GM12878 (cell line): ENCODE measurements at regions of chr4 and their contacts with region 1.

Region 1: DNA sequence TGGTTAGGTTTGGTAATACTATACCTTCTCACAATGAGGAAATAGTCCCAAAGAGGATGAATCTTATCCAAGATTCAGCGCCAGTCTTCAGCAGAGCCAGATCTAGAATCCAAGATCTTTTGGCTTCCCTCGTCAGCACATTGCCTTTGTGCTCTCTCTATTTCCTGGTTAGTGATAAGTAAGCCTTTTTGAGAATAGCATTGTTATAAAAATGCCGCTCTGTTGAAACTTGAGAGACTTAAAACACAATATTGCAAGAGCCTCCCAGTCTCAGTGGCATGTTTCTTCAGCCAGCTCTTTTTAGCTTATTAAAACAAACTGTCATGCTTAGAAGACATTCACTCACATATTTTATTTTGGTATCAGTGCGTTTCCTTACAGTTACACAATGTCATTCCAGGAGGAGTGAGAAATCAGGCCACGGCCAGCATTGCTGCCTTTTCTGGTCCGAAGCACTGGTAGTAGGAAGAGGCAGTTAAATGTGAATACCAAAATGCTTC is 141.4 kb downstream of the KLHL8 start:
- DNase-seq: no peak
- ATAC-seq: no peak
- H3K4me3 ChIP-seq: no peak overlapping the region
- H3K27ac ChIP-seq: no peak overlapping the region
- H3K4me1 ChIP-seq: peaks cover 9% of the 10 kb centered on the region; the same call in 1 of the 2 replicates
- H3K27me3 ChIP-seq: no peaks in the 10 kb centered on the region
- CTCF ChIP-seq: no peak
- EP300 ChIP-seq: no peak
- POLR2A ChIP-seq: no peak
- RAD21 ChIP-seq: no peak

Region 2: GRCh38 chr4:87012265-87012953 is 66.6 kb before region 1 on chr4:
- CTCF ChIA-PET with region 1: interaction called, 4 read pairs
- POLR2A ChIA-PET with region 1: interaction called, 11 read pairs
- RAD21 ChIA-PET with region 1: interaction called, 20 read pairs
- SMC1A ChIA-PET with region 1: interaction called, 10 read pairs
- in situ Hi-C with region 1: no loop called
- intact Hi-C with region 1: loop called (anchors 5 kb)
- DNase-seq: peak; percentile 44
- ATAC-seq: peak; percentile 54
- H3K4me3 ChIP-seq: peak overlapping the region; percentile 33
- H3K27ac ChIP-seq: peak overlapping the region; percentile 38
- H3K4me1 ChIP-seq: peaks cover 12% of the 10 kb centered on the region
- H3K27me3 ChIP-seq: no peaks in the 10 kb centered on the region
- CTCF ChIP-seq: no peak
- EP300 ChIP-seq: no peak
- POLR2A ChIP-seq: no peak
- RAD21 ChIP-seq: no peak

Region 3: DNA sequence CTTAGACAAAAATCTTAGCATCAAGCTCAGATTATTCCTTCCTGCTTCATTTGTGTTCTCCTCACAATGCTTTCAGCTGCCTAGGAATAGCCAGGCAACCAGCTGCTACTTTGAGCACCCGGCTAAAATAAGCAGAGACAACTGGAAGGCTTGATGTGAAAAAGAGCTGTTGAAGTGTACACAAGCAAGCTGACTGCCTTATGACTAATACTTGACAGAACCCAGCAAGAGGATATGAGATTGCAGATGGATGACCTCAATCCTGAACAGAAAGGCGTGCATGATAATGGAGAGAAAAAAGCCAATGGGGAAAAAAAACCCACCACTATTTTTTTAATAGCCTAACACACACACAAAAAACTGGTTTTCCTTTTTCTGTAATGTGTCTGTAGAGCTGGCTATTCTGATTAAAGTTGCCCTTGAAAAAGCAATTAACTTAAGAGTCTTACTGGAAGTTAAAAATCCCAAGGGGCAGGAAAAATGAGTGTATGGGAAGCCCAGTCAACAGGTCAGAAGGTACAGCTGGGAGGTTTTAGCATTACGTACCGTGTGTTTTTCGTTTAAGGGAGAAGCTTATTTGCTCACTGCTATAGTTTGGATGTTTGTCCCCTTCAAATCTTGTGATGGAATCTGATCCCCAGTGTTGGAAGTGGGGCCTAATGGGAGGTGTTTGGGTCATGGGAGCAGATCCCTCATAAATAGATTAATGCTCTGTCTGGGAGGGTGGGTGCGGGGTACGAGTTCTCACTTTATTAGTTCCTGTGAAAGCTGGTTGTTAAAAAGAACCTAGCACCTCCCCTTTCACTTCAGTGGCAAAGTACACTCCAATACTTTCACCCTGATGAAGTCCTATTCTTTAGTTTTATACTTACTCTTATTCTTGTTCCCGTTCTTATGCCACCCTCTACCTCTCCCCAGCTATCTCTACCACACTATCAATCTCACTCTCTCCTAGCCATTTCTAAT is 1262.5 kb after region 1 on chr4:
- CTCF ChIA-PET with region 1: no interaction called
- POLR2A ChIA-PET with region 1: no interaction called
- RAD21 ChIA-PET with region 1: no interaction called
- SMC1A ChIA-PET with region 1: no interaction called
- in situ Hi-C with region 1: no loop called
- intact Hi-C with region 1: no loop called
- DNase-seq: no peak
- ATAC-seq: peak; percentile 56
- H3K4me3 ChIP-seq: no peak overlapping the region
- H3K27ac ChIP-seq: no peak overlapping the region
- H3K4me1 ChIP-seq: no peaks in the 10 kb centered on the region
- H3K27me3 ChIP-seq: no peaks in the 10 kb centered on the region
- CTCF ChIP-seq: no peak
- EP300 ChIP-seq: no peak
- POLR2A ChIP-seq: no peak
- RAD21 ChIP-seq: no peak